HepG2 (cell line): ENCODE measurements at regions of chr2 and their contacts with region 1.

Region 1: GRCh38 chr2:177413703-177414102 is 21.1 kb downstream of the AGPS start:
- DNase-seq: no peak
- ATAC-seq: no peak
- H3K4me3 ChIP-seq: no peak overlapping the region
- H3K27ac ChIP-seq: peak overlapping the region; percentile 1
- H3K4me1 ChIP-seq: peaks cover 61% of the 10 kb centered on the region
- H3K27me3 ChIP-seq: no peaks in the 10 kb centered on the region
- CTCF ChIP-seq: no peak
- EP300 ChIP-seq: no peak
- POLR2A ChIP-seq: no peak
- RAD21 ChIP-seq: no peak

Region 2: GRCh38 chr2:177397481-177398289 is 16.0 kb before region 1 on chr2:
- CTCF ChIA-PET with region 1: no interaction called
- POLR2A ChIA-PET with region 1: interaction called, 13 read pairs
- in situ Hi-C with region 1: no loop called
- intact Hi-C with region 1: loop called (anchors 2 kb)
- DNase-seq: peak; percentile 97
- ATAC-seq: peak; percentile 68
- H3K4me3 ChIP-seq: peak overlapping the region; percentile 28 to 43 (median 39); a peak in 4 of 6 replicates
- H3K27ac ChIP-seq: peak overlapping the region; percentile 86
- H3K4me1 ChIP-seq: peaks cover 88% of the 10 kb centered on the region
- H3K27me3 ChIP-seq: no peaks in the 10 kb centered on the region; a peak in 1 of 5 replicates
- CTCF ChIP-seq: 0 out of 2 replicates have a peak, but pooled peaks have one; percentile 10
- EP300 ChIP-seq: peak in 1 of 2 experiments; percentile 98; a peak in 2 of 4 replicates
- POLR2A ChIP-seq: no peak
- RAD21 ChIP-seq: peak; percentile 28; the same call in 1 of the 2 replicates

Region 3: DNA sequence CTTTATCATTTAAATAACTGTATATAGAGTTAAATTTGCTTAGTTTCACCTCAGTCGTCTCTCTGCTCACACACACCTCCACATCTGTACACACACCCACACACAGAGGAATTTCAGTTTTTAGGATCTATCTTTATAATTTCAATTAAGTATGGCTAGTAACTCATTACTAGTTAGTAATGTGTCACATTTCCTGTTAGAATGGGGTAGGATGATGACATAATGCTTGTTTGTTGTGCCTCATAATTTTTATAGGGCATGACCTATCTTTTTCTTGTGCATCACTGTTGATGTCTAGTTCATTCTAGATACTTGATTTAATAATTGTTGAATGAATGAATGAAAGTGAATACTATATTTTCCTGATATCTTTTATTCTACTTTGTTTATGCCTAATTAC is 87.5 kb after region 1 on chr2:
- CTCF ChIA-PET with region 1: no interaction called
- POLR2A ChIA-PET with region 1: no interaction called
- in situ Hi-C with region 1: no loop called
- intact Hi-C with region 1: no loop called
- DNase-seq: no peak
- ATAC-seq: no peak
- H3K4me3 ChIP-seq: no peak overlapping the region
- H3K27ac ChIP-seq: no peak overlapping the region
- H3K4me1 ChIP-seq: no peaks in the 10 kb centered on the region
- H3K27me3 ChIP-seq: no peaks in the 10 kb centered on the region
- CTCF ChIP-seq: no peak
- EP300 ChIP-seq: no peak
- POLR2A ChIP-seq: no peak
- RAD21 ChIP-seq: no peak